Breast epithelium (tissue), 4 donors: ENCODE measurements at regions of chr19 and their contacts with region 1.

Region 1: DNA sequence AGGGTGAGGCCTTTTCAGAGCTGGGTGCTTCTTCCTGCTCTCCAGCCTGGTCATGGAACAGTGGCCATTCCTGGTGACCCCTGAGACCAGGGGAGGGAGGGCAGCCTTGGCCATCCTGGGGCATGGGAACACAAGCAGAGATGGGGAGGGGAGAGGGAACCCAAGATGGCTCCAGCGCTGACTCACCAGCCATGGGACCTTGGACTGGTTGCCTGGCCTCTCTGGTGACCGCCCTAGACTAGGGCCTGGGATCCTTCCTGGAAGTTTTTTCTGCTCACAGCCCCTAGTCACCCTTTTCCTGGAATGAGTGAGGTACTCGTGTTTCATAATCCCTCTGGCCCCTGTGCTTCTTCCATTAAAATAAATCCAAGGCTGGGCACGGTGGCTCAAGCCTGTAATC is 3.3 kb upstream of the OPA3 start:
- DNase-seq: no peak
- H3K4me3 ChIP-seq: no peak overlapping the region
- H3K27ac ChIP-seq: peak overlapping the region in 1 of 2 donors; percentile 66
- H3K4me1 ChIP-seq: no peaks in the 10 kb centered on the region
- H3K27me3 ChIP-seq: peaks cover 0 to 22% of the 10 kb centered on the region in 2 donors
- CTCF ChIP-seq: no peak
- POLR2A ChIP-seq: no peak

Region 2: GRCh38 chr19:45508861-45509691 is 78.8 kb before region 1 on chr19:
- intact Hi-C with region 1: loop called (anchors 1 kb)
- DNase-seq: peak; percentile 77 to 83
- H3K4me3 ChIP-seq: peak overlapping the region; percentile 65 to 99 (median 97)
- H3K27ac ChIP-seq: peak overlapping the region; percentile 94 to 95
- H3K4me1 ChIP-seq: peaks cover 4% of the 10 kb centered on the region in 2 donors
- H3K27me3 ChIP-seq: no peaks in the 10 kb centered on the region
- CTCF ChIP-seq: peak in 2 of 3 donors; percentile 40 to 44
- POLR2A ChIP-seq: no peak